Naive thymus-derived CD4-positive, alpha-beta T cell (primary cell): ENCODE measurements at regions of chr11 and their contacts with region 1.

Region 1: DNA sequence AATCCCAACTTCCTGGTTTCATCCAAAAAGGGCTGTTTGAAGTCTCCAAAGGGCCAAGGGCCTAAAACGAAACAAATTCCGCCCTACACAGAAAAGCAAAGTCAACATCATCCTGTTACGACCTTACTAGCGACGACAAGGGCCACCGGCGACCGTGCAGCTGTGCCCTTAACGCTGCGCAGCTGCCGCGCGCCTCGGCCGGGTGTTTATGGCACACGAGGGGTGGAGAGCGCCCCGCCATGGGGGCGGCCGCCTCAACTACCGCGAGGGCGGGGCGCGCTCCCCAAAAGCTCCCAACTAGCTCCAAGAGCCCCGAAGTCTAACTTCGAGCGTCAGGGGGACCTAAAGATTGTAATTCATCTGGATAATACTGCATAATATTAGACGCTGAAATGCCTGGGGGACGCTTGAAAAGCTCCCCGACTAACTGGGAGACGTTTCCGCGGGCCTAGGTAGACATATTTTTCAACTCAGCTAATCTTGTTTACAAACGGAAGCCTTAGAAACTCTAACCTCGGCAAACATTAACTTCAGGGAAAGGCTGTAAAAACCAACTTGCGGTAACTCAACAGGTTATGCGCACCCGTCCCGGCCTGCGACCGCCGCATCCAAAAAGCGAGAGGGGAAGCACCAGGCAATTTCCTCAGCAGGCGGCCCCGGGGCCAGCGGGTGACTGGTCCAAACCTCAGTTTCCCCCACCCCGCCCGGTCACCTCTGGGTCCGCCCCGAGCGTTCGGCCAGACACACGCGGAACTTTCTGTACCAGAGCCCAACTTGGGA is 694 bp downstream of the TMEM123 start:
- DNase-seq: peak; percentile 64 to 82 (median 77)
- ATAC-seq: peak; percentile 74
- H3K4me3 ChIP-seq: peak overlapping the region; percentile 71
- H3K4me3 Mint-ChIP-seq: peak overlapping the region; percentile 88 to 99 (median 96)
- H3K27ac ChIP-seq: peak overlapping the region; percentile 80
- H3K27ac Mint-ChIP-seq: peak overlapping the region; percentile 93 to 98 (median 94)
- H3K4me1 ChIP-seq: peaks cover 48 to 52% of the 10 kb centered on the region in 2 donors
- H3K4me1 Mint-ChIP-seq: peaks cover 57 to 81% (median 71%) of the 10 kb centered on the region in 7 donors
- H3K27me3 ChIP-seq: no peaks in the 10 kb centered on the region
- H3K27me3 Mint-ChIP-seq: no peaks in the 10 kb centered on the region

Region 2: DNA sequence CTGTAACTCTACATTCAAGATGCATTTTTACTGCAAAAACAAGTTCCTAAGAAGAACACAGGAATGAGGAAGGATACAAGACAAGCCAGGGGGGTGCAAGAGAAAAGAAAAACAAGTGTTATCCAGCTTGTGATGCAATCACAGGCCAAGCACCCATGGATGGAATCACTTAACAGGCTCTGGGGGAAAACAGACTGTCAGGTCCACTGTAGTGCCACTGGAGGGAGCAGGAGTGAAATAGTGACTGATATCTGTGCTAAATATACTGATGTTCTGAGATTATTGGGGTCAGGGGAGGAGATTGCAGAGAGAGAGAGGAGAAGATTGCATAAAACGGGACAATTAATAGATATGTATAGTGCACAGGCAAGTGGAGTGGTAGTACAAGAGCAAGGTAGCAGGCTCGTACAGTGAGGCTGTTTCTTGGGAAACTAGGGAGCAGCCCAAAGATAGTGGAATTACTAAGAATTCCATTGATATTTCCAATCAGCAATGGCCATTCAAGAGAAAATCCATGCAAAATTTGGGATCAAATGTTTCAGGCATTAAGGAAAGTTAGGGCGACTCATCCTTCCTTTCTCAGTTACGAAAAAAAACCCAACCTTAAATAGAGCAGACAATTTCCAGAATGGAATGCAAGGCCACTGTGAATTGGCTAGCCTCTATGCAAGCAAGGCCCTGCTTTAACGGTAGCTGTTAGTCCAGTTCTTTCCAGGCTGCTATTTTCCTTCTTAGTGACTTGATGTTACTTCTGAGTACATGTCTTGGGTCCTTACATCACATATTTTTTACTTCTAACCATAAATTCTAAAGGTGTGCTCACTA is 589.2 kb before region 1 on chr11:
- CTCF ChIA-PET with region 1: no interaction called
- POLR2A ChIA-PET with region 1: no interaction called
- intact Hi-C with region 1: no loop called
- DNase-seq: no peak
- ATAC-seq: no peak
- H3K4me3 ChIP-seq: no peak overlapping the region
- H3K4me3 Mint-ChIP-seq: no peak overlapping the region
- H3K27ac ChIP-seq: no peak overlapping the region
- H3K27ac Mint-ChIP-seq: peak overlapping the region in 1 of 9 donors; percentile 2
- H3K4me1 ChIP-seq: no peaks in the 10 kb centered on the region
- H3K4me1 Mint-ChIP-seq: peaks cover 0 to 4% (median 0%) of the 10 kb centered on the region in 7 donors
- H3K27me3 ChIP-seq: no peaks in the 10 kb centered on the region
- H3K27me3 Mint-ChIP-seq: peaks cover 5 to 22% (median 15%) of the 10 kb centered on the region in 5 donors

Region 3: DNA sequence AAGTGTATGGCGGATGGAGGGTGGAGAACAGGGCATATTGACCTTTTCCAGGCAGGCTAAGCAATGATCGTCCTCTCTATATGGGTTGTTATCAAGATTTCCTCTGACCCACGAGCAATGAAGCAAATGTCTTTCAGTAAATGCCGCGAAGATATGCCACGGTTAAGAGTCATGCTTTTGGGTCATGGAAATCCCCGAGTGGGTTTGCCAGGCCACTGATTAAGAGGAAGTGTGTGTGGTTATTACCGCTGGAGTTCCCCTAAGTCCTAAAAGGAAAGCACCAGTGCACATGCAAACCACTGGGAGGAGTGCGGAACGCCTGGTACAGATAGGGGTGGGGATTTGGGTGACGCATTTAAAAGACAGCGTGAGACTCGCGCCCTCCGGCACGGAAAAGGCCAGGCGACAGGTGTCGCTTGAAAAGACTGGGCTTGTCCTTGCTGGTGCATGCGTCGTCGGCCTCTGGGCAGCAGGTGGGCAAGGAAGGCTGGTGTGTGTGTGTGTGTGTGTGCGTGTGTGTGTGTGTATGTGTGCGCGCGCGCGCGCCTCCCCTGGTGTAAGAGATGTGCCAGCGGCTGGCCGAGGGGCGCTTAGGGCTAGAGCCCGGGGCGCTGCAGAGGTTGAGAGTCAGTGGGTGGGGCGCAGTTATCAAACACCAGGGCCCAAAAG is 134.6 kb before region 1 on chr11 and contains the start of gene BIRC3:
- CTCF ChIA-PET with region 1: interaction called, 3 read pairs
- POLR2A ChIA-PET with region 1: interaction called, 3 read pairs
- intact Hi-C with region 1: loop called (anchors 1 kb)
- DNase-seq: peak; percentile 77 to 98 (median 93)
- ATAC-seq: peak; percentile 94
- H3K4me3 ChIP-seq: peak within 1 kb of the TSS; percentile 74
- H3K4me3 Mint-ChIP-seq: peak within 1 kb of the TSS; percentile 85 to 98 (median 96)
- H3K27ac ChIP-seq: peak within 1 kb of the TSS; percentile 97
- H3K27ac Mint-ChIP-seq: peak within 1 kb of the TSS; percentile 93 to 99 (median 98)
- H3K4me1 ChIP-seq: peaks cover 43 to 58% of the 10 kb centered on the region in 2 donors
- H3K4me1 Mint-ChIP-seq: peaks cover 44 to 87% (median 74%) of the 10 kb centered on the region in 7 donors
- H3K27me3 ChIP-seq: no peaks in the 10 kb centered on the region
- H3K27me3 Mint-ChIP-seq: peaks cover 0 to 2% (median 0%) of the 10 kb centered on the region in 5 donors
- total RNA-seq, gene BIRC3: 62.3 to 160 (median 128) TPM

Region 4: GRCh38 chr11:102367364-102367763 is 84.5 kb before region 1 on chr11:
- CTCF ChIA-PET with region 1: interaction called, 11 read pairs
- POLR2A ChIA-PET with region 1: interaction called, 10 read pairs
- intact Hi-C with region 1: loop called in 1 of 2 experiments (anchors 1 kb)
- DNase-seq: peak in 6 of 9 donors; percentile 33 to 65 (median 56)
- ATAC-seq: peak; percentile 77
- H3K4me3 ChIP-seq: no peak overlapping the region
- H3K4me3 Mint-ChIP-seq: peak overlapping the region in 3 of 10 donors; percentile 4 to 28 (median 19)
- H3K27ac ChIP-seq: no peak overlapping the region
- H3K27ac Mint-ChIP-seq: peak overlapping the region; percentile 16 to 93 (median 83)
- H3K4me1 ChIP-seq: peaks cover 0 to 12% of the 10 kb centered on the region in 2 donors
- H3K4me1 Mint-ChIP-seq: peaks cover 9 to 48% (median 33%) of the 10 kb centered on the region in 7 donors
- H3K27me3 ChIP-seq: no peaks in the 10 kb centered on the region
- H3K27me3 Mint-ChIP-seq: no peaks in the 10 kb centered on the region

Region 5: DNA sequence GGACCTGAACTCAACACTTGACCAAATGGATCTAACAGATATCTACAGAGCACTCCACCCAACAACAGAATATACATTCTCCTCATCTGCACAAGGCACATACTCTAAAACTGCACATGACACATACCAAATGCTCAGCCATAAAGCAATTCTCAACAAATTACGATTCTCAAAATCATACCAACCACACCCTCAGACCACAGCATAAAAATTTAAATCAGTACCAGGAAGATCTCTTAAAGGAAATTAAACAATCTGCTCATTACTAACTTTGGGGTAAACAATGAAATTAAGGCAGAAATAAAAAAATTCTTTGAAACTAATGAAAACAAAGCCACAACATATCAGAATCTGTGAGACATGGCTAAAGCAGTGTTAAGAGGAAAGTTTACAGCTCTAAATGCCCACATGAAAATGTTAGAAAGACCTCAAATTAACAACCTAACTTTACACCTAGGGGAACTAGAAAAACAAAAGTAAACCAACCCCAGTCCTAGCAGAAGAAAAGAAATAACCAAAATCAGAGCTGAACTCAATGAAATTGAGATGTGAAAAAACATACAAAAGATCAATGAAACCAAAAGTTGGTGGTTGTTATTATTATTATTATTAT is 36.5 kb before region 1 on chr11:
- CTCF ChIA-PET with region 1: interaction called, 8 read pairs
- POLR2A ChIA-PET with region 1: interaction called, 13 read pairs
- intact Hi-C with region 1: loop called (anchors 1 to 2 kb)
- DNase-seq: peak in 3 of 9 donors; percentile 26 to 45 (median 39)
- ATAC-seq: peak; percentile 59
- H3K4me3 ChIP-seq: peak overlapping the region; percentile 34
- H3K4me3 Mint-ChIP-seq: peak overlapping the region; percentile 35 to 89 (median 80)
- H3K27ac ChIP-seq: peak overlapping the region; percentile 37
- H3K27ac Mint-ChIP-seq: peak overlapping the region; percentile 63 to 97 (median 89)
- H3K4me1 ChIP-seq: peaks cover 30 to 70% of the 10 kb centered on the region in 2 donors
- H3K4me1 Mint-ChIP-seq: peaks cover 67 to 100% (median 96%) of the 10 kb centered on the region in 7 donors
- H3K27me3 ChIP-seq: no peaks in the 10 kb centered on the region
- H3K27me3 Mint-ChIP-seq: no peaks in the 10 kb centered on the region

Region 6: DNA sequence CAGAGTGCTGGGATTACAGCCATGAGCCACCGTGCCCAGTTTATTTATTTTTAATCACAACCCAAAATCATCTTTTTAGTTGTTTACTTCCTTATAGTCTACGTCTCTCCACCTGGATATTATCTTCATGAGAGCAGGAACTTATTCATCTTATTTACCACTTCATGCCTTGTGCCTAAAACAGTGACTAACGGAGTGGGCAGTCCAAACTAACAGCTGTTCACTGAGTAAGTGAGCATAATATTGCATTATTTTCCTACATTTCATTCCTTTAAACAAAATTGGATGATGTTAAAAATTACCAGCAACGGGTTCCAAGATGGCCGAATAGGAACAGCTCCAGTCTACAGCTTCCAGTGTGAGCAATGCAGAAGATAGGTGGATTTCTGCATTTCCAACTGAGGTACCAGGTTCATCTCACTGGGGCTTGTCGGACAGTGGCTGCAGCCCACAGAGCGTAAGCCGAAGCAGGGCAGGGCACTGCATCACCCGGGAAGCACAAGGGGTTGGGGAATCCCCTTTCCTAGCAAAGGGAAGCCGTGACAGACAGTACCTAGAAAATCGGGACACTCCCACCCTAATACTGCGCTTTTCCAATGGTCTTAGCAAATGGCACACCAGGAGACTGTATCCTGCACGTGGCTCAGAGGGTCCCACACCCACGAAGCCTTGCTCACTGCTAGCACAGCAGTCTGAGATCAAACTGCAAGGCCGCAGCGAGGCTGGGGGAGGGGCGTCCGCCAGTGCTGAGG is 13.4 kb before region 1 on chr11:
- CTCF ChIA-PET with region 1: no interaction called
- POLR2A ChIA-PET with region 1: interaction called, 15 read pairs
- intact Hi-C with region 1: loop called in 1 of 2 experiments (anchors 1 kb)
- DNase-seq: peak in 1 of 9 donors; percentile 39
- ATAC-seq: no peak
- H3K4me3 ChIP-seq: no peak overlapping the region
- H3K4me3 Mint-ChIP-seq: peak overlapping the region; percentile 49 to 84 (median 78)
- H3K27ac ChIP-seq: peak overlapping the region; percentile 51
- H3K27ac Mint-ChIP-seq: peak overlapping the region; percentile 69 to 92 (median 85)
- H3K4me1 ChIP-seq: peaks cover 0 to 26% of the 10 kb centered on the region in 2 donors
- H3K4me1 Mint-ChIP-seq: peaks cover 54 to 95% (median 82%) of the 10 kb centered on the region in 7 donors
- H3K27me3 ChIP-seq: no peaks in the 10 kb centered on the region
- H3K27me3 Mint-ChIP-seq: no peaks in the 10 kb centered on the region

Region 7: GRCh38 chr11:102476812-102477211 is 24.9 kb after region 1 on chr11:
- CTCF ChIA-PET with region 1: interaction called, 4 read pairs
- POLR2A ChIA-PET with region 1: interaction called, 11 read pairs
- intact Hi-C with region 1: loop called in 1 of 2 experiments (anchors 1 kb)
- DNase-seq: peak in 5 of 9 donors; percentile 17 to 42 (median 34)
- ATAC-seq: peak; percentile 88
- H3K4me3 ChIP-seq: no peak overlapping the region
- H3K4me3 Mint-ChIP-seq: peak overlapping the region; percentile 51 to 83 (median 70)
- H3K27ac ChIP-seq: peak overlapping the region; percentile 46
- H3K27ac Mint-ChIP-seq: peak overlapping the region; percentile 63 to 96 (median 91)
- H3K4me1 ChIP-seq: peaks cover 11 to 39% of the 10 kb centered on the region in 2 donors
- H3K4me1 Mint-ChIP-seq: peaks cover 12 to 75% (median 63%) of the 10 kb centered on the region in 7 donors
- H3K27me3 ChIP-seq: no peaks in the 10 kb centered on the region
- H3K27me3 Mint-ChIP-seq: no peaks in the 10 kb centered on the region